HCT116 (cell line): ENCODE measurements at regions of chr1 and their contacts with region 1.

Region 1: GRCh38 chr1:154479764-154480421 is 22.1 kb upstream of the TDRD10 start:
- DNase-seq: peak; percentile 86
- ATAC-seq: peak; percentile 88
- H3K4me3 ChIP-seq: no peak overlapping the region
- H3K27ac ChIP-seq: no peak overlapping the region
- H3K4me1 ChIP-seq: peaks cover 9 to 57% of the 10 kb centered on the region in 2 experiments
- H3K27me3 ChIP-seq: no peaks in the 10 kb centered on the region
- CTCF ChIP-seq: peak; percentile 85 to 97 (median 95)
- POLR2A ChIP-seq: no peak
- RAD21 ChIP-seq: peak; percentile 97

Region 2: GRCh38 chr1:154324669-154325582 is 155.0 kb before region 1 on chr1 and contains the start of gene ATP8B2:
- CTCF ChIA-PET with region 1: interaction called, 5 read pairs
- POLR2A ChIA-PET with region 1: no interaction called
- RAD21 ChIA-PET with region 1: no interaction called
- intact Hi-C with region 1: loop called (anchors 5 kb)
- DNase-seq: peak; percentile 59
- ATAC-seq: peak; percentile 65
- H3K4me3 ChIP-seq: peak within 1 kb of the TSS; percentile 77 to 79
- H3K27ac ChIP-seq: peak within 1 kb of the TSS; percentile 79
- H3K4me1 ChIP-seq: peaks cover 26 to 49% of the 10 kb centered on the region in 2 experiments
- H3K27me3 ChIP-seq: no peaks in the 10 kb centered on the region
- CTCF ChIP-seq: peak; percentile 75 to 94 (median 93)
- POLR2A ChIP-seq: no peak
- RAD21 ChIP-seq: peak; percentile 49
- total RNA-seq, gene ATP8B2: 22.1 TPM

Region 3: DNA sequence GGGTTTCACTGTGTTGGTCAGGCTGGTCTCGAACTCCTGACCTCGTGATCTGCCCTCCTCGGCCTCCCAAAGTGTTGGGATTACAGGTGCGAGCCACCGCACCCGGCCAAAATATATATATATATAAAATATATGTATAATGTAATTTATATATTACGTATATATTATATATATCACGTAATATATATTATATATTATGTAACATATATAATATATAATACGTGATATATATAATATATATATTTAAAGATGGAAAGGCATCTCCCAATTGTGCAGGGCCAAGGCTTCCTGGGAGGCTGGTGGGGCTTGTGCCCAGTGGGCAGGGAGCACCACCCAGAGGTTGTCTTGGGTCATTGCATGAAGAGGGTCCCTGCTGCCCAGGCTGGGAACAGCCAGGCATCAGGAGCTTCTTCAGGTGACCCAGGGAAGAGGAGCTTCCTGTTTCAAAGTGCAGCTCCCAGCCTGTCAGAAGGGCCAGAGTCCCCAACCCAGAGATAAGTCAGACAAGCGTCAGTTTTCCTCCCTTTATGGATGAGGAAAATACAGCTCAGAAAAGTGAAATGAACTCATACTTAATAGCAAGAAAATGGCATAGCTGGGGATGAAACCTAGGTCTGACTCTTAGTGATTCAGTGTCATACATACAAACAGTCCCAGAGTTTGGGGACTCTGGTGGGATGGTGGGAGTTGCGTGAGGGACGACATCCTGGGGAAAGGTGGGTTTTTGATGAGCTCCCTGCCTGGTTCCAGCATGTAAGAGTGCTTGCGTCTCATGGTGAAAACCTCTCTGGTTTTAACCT is 66.6 kb after region 1 on chr1:
- CTCF ChIA-PET with region 1: interaction called, 62 read pairs
- POLR2A ChIA-PET with region 1: no interaction called
- RAD21 ChIA-PET with region 1: interaction called, 6 to 8 read pairs
- intact Hi-C with region 1: loop called (anchors 1 kb)
- DNase-seq: peak; percentile 63
- ATAC-seq: peak; percentile 98
- H3K4me3 ChIP-seq: no peak overlapping the region
- H3K27ac ChIP-seq: no peak overlapping the region
- H3K4me1 ChIP-seq: peaks cover 0 to 10% of the 10 kb centered on the region in 2 experiments; a peak in 2 of 4 replicates
- H3K27me3 ChIP-seq: 0 out of 2 replicates have a peak, but pooled peaks cover 4% of the 10 kb centered on the region
- CTCF ChIP-seq: peak; percentile 67 to 92 (median 88)
- POLR2A ChIP-seq: no peak
- RAD21 ChIP-seq: peak; percentile 94

Region 4: GRCh38 chr1:154747740-154748404 is 268.0 kb after region 1 on chr1:
- CTCF ChIA-PET with region 1: no interaction called
- POLR2A ChIA-PET with region 1: no interaction called
- RAD21 ChIA-PET with region 1: no interaction called
- intact Hi-C with region 1: loop called (anchors 5 kb)
- DNase-seq: no peak
- ATAC-seq: no peak
- H3K4me3 ChIP-seq: no peak overlapping the region
- H3K27ac ChIP-seq: no peak overlapping the region
- H3K4me1 ChIP-seq: peaks cover 0 to 8% of the 10 kb centered on the region in 2 experiments; a peak in 1 of 4 replicates
- H3K27me3 ChIP-seq: peaks cover 3% of the 10 kb centered on the region; the same call in 1 of the 2 replicates
- CTCF ChIP-seq: no peak
- POLR2A ChIP-seq: no peak
- RAD21 ChIP-seq: no peak

Region 5: DNA sequence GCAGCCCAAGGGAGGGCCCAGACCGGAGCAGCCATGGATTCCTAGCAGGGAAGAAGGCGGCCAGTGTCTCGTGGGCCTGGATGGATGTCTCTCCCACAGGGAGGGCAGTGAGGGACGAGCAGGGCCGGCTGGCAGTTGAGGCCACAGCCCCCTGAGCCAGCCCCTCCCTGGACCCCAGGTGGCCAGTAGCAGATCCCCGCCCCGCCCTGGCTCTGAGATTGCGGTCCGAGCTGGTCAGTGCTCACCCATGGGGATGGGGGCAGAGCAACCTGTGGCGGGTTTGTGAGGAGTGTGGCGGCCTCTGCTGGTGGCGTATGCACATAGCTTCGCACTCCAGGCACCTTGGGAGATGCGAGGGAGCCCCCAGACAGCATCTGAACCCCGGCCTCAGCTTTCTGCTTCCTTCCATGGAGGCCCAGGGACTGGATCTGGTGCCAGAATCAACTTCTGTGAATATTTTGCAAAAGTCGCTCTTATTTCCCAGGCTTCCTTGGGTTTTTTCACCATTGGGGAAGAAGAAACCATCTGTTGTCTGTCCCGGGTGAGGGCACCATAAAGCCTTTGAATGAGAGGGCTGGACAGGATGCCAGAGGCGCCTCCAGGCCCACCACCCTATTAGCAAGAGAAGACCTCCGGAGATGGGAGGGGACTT is 398.6 kb after region 1 on chr1:
- CTCF ChIA-PET with region 1: interaction called, 10 read pairs
- POLR2A ChIA-PET with region 1: no interaction called
- RAD21 ChIA-PET with region 1: no interaction called
- intact Hi-C with region 1: loop called (anchors 5 kb)
- DNase-seq: peak; percentile 66
- ATAC-seq: peak; percentile 100
- H3K4me3 ChIP-seq: no peak overlapping the region
- H3K27ac ChIP-seq: no peak overlapping the region
- H3K4me1 ChIP-seq: peaks cover 0 to 19% of the 10 kb centered on the region in 2 experiments; a peak in 3 of 4 replicates
- H3K27me3 ChIP-seq: no peaks in the 10 kb centered on the region
- CTCF ChIP-seq: peak; percentile 89
- POLR2A ChIP-seq: no peak
- RAD21 ChIP-seq: peak; percentile 96